Endothelial cell of umbilical vein (primary cell): ENCODE measurements at regions of chr5 and their contacts with region 1.

Region 1: DNA sequence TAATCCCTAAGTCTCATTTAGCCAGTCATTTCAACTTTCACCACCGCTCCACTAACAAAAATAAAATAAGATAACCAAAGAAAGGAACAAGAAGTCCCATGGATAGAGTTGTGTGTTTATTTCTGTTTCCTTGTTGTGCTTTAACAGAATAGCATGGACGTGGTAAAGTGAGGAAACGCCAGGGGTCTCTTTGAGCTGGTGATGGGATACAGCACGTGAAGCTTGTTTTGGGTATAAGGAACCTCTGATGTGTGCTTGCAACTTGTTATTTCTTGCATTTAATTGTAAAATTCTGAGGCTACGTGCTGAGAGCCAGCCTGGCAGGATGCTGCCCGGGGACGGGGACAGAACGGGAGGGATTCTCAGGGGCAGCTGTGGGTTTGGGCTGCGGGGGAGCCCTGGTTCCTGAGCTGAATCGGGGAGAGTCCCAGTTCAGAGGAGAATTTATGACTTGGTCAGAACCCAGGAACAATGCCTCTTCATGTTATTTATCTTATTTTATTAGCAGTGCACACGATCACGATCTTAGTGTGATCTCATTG is 63.4 kb downstream of the ANKRD33B start:
- DNase-seq: no peak
- H3K4me3 ChIP-seq: peak overlapping the region; percentile 7 to 50 (median 22)
- H3K27ac ChIP-seq: peak overlapping the region; percentile 50
- H3K4me1 ChIP-seq: peaks cover 6% of the 10 kb centered on the region
- H3K27me3 ChIP-seq: no peaks in the 10 kb centered on the region
- CTCF ChIP-seq: no peak
- POLR2A ChIP-seq: no peak

Region 2: DNA sequence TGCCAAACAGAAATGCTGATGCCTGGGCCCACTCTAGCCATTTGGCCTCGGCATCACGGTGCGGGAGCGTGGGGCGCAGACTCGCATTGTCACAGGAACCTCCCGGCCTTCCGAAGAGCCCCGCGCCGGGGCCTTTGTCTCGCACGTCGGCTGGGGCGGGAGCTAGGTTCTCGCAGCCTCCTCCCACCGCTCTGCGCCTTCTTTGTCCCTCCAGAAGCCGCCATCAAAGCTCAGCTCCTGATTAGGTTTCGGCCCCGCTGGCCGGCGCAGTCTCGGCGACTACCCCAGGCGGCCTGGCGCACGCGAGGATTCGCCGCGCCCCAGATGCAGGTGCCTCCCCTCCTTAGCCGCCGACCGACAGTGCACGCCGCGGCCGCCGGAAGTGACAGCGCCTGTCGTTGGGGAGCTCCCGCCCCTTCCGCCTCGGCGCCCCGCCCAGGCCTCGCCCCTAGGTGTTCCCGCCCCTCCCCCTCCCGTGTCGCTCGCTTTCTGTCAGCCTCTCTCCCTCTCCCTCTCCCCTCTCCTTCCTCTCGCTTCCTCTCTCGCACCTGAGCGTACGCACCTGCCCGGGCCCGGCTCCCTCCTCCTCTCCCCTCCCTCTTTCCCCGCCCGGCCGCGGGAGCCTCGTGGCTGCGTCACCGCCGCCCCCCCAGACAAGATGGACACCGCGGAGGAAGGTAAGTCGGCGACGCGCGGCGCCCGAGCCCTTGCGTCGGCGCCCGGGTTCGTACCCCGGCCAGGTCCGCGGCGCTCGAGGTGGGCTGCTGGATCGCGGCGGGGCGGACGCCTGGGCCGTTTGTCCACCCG is 273.8 kb before region 1 on chr5 and contains the start of gene MARCHF6:
- CTCF ChIA-PET with region 1: interaction called, 5 read pairs
- POLR2A ChIA-PET with region 1: no interaction called
- dilution Hi-C with region 1: no loop called
- intact Hi-C with region 1: loop called (anchors 2 kb)
- DNase-seq: peak; percentile 89
- H3K4me3 ChIP-seq: peak within 1 kb of the TSS; percentile 47 to 94 (median 72)
- H3K27ac ChIP-seq: peak within 1 kb of the TSS; percentile 85
- H3K4me1 ChIP-seq: peaks cover 17% of the 10 kb centered on the region
- H3K27me3 ChIP-seq: no peaks in the 10 kb centered on the region
- CTCF ChIP-seq: no peak
- POLR2A ChIP-seq: peak; percentile 97
- total RNA-seq, gene MARCHF6: 105 and 108 TPM in 2 replicates

Region 3: DNA sequence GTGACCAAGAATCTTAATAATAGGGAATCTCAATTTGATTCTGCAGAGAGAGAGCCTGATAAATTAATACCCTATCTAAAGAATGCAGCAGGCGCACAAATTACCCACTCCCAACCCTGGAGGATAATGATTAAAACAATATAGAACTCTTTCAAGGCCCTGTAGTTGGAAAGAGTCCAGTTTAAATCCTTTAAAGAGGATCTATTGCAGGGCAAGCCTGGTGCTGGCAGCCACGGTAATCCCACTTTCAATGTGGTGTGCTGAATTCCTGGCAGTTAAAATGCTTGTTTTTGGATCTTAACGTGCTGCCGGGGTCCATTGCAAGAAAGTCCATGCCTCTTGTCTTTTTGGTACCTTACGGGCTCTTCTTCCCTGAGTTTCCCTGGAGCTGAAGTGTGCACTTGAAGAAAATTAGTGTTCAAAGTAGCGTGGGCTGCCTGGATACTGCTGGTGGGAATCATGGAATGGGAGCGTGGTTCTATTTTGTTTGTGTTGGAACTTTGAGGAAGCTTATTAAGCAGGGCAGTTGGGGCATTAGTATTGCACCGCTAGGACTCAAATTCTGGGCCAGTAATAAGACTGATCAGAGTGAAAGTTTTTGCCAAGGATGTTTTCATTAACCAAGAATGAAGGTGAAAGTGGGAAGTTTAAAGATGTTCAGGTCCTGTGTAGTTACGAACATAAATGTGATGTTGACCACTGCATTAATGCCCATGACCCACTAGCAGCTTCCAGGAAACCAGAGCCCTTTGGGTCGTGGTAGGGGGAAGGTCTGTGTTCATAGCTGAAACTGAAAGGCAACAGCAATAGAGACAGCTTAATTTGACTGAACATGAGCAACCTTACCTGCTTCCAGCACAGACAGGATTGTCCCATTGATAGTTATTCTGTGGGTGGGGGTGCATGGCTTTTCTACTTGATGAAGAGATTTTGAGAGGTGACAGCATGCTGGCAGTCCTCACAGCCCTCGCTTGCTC is 252.9 kb before region 1 on chr5:
- CTCF ChIA-PET with region 1: no interaction called
- POLR2A ChIA-PET with region 1: no interaction called
- dilution Hi-C with region 1: no loop called
- intact Hi-C with region 1: no loop called
- DNase-seq: no peak
- H3K4me3 ChIP-seq: no peak overlapping the region
- H3K27ac ChIP-seq: no peak overlapping the region
- H3K4me1 ChIP-seq: no peaks in the 10 kb centered on the region
- H3K27me3 ChIP-seq: no peaks in the 10 kb centered on the region
- CTCF ChIP-seq: no peak
- POLR2A ChIP-seq: no peak

Region 4: GRCh38 chr5:10432059-10433008 is 194.9 kb before region 1 on chr5:
- CTCF ChIA-PET with region 1: no interaction called
- POLR2A ChIA-PET with region 1: no interaction called
- dilution Hi-C with region 1: no loop called
- intact Hi-C with region 1: no loop called
- DNase-seq: no peak
- H3K4me3 ChIP-seq: no peak overlapping the region
- H3K27ac ChIP-seq: no peak overlapping the region
- H3K4me1 ChIP-seq: no peaks in the 10 kb centered on the region
- H3K27me3 ChIP-seq: no peaks in the 10 kb centered on the region
- CTCF ChIP-seq: no peak
- POLR2A ChIP-seq: no peak

Region 5: GRCh38 chr5:10460252-10460906 is 166.9 kb before region 1 on chr5:
- CTCF ChIA-PET with region 1: interaction called, 283 read pairs
- POLR2A ChIA-PET with region 1: no interaction called
- dilution Hi-C with region 1: loop called (anchors 10 kb)
- intact Hi-C with region 1: no loop called
- DNase-seq: peak; percentile 59
- H3K4me3 ChIP-seq: no peak overlapping the region
- H3K27ac ChIP-seq: no peak overlapping the region
- H3K4me1 ChIP-seq: peaks cover 20% of the 10 kb centered on the region
- H3K27me3 ChIP-seq: no peaks in the 10 kb centered on the region
- CTCF ChIP-seq: peak in 1 of 2 donors; percentile 16
- POLR2A ChIP-seq: no peak

Region 6: GRCh38 chr5:10513501-10514442 is 113.5 kb before region 1 on chr5:
- CTCF ChIA-PET with region 1: interaction called, 15 read pairs
- POLR2A ChIA-PET with region 1: interaction called, 3 read pairs
- dilution Hi-C with region 1: no loop called
- intact Hi-C with region 1: loop called (anchors 1 kb)
- DNase-seq: peak; percentile 96
- H3K4me3 ChIP-seq: no peak overlapping the region
- H3K27ac ChIP-seq: peak overlapping the region; percentile 85
- H3K4me1 ChIP-seq: peaks cover 20% of the 10 kb centered on the region
- H3K27me3 ChIP-seq: no peaks in the 10 kb centered on the region
- CTCF ChIP-seq: no peak
- POLR2A ChIP-seq: peak; percentile 58

Region 7: GRCh38 chr5:10577371-10578292 is 49.6 kb before region 1 on chr5:
- CTCF ChIA-PET with region 1: interaction called, 31 read pairs
- POLR2A ChIA-PET with region 1: no interaction called
- dilution Hi-C with region 1: no loop called
- intact Hi-C with region 1: loop called (anchors 2 kb)
- DNase-seq: peak; percentile 86
- H3K4me3 ChIP-seq: no peak overlapping the region
- H3K27ac ChIP-seq: peak overlapping the region; percentile 32
- H3K4me1 ChIP-seq: peaks cover 12% of the 10 kb centered on the region
- H3K27me3 ChIP-seq: no peaks in the 10 kb centered on the region
- CTCF ChIP-seq: no peak
- POLR2A ChIP-seq: peak; percentile 28

Region 8: DNA sequence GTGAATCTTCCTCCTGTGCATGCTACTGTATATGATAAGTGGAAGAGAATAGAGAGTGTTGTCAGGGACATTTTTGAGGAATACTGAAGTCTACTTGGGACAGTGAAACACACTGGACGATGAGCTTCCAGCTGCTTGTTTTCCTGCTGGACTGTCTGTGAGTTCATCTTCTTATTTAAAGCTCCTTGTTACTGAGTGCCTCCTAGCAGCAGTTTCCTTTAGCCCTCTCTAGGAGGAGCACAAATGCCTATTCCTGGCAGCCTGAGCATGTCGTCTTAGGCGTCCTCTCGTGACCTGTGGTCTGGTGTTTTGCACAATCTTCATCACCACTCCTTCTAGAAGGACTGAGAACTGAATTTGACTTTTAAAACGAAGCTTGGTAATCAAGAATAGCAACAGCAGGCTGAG is 19.6 kb before region 1 on chr5:
- CTCF ChIA-PET with region 1: interaction called, 25 read pairs
- POLR2A ChIA-PET with region 1: no interaction called
- dilution Hi-C with region 1: no loop called
- intact Hi-C with region 1: no loop called
- DNase-seq: peak; percentile 33
- H3K4me3 ChIP-seq: no peak overlapping the region
- H3K27ac ChIP-seq: no peak overlapping the region
- H3K4me1 ChIP-seq: no peaks in the 10 kb centered on the region
- H3K27me3 ChIP-seq: no peaks in the 10 kb centered on the region
- CTCF ChIP-seq: no peak
- POLR2A ChIP-seq: no peak